ENCODE measurements at regions of chr9 and their contacts with region 1.

Region 1: GRCh38 chr9:73239570-73240267 is 88.1 kb downstream of the ANXA1 start:
- DNase-seq: no peak
- ATAC-seq: no peak
- H3K4me3 Mint-ChIP-seq: no peak overlapping the region
- H3K27ac Mint-ChIP-seq: no peak overlapping the region
- H3K4me1 Mint-ChIP-seq: no peaks in the 10 kb centered on the region
- H3K27me3 Mint-ChIP-seq: peaks cover 14% of the 10 kb centered on the region

Region 2: GRCh38 chr9:73173557-73174329 is 66.0 kb before region 1 on chr9:
- CTCF ChIA-PET with region 1: no interaction called
- POLR2A ChIA-PET with region 1: interaction called, 12 read pairs
- intact Hi-C with region 1: no loop called
- DNase-seq: no peak
- ATAC-seq: no peak
- H3K4me3 Mint-ChIP-seq: no peak overlapping the region
- H3K27ac Mint-ChIP-seq: no peak overlapping the region
- H3K4me1 Mint-ChIP-seq: peaks cover 10% of the 10 kb centered on the region
- H3K27me3 Mint-ChIP-seq: no peaks in the 10 kb centered on the region

Region 3: DNA sequence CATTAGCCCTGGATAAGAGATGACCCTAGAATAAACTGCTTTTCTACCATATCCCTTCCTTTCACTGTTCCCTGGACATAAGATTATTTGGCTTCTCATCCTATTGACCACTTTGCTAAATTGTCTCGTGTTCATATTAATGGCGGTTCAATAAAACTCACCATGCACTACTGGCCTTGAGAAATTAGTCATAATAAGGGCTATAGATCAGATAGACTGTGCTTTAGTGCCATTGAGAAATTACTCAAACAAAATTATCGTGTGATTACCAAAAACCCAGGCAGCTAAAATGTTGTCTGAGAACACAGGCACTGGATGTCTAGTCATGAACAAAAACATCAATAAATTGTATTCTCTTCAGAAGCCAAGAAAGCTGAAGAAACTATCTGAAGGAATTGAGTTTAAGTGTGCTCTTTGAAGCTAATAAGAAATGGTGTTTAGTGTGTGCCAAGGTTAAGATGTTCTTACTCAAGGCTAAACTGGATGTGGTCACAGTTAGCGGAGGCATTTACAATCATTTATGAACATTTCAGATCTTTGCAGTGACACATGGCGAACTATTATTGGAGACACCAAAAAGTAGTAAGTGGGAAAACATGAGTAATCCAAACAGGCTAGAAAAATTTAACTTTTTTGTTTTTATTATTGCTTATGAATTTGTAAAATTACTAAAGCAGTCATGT is 797.0 kb after region 1 on chr9:
- CTCF ChIA-PET with region 1: no interaction called
- POLR2A ChIA-PET with region 1: no interaction called
- intact Hi-C with region 1: no loop called
- DNase-seq: no peak
- ATAC-seq: peak; percentile 53
- H3K4me3 Mint-ChIP-seq: no peak overlapping the region
- H3K27ac Mint-ChIP-seq: no peak overlapping the region
- H3K4me1 Mint-ChIP-seq: peaks cover 3% of the 10 kb centered on the region
- H3K27me3 Mint-ChIP-seq: no peaks in the 10 kb centered on the region

Measured in activated CD4-positive, alpha-beta T cell treated with anti-CD3 and anti-CD28 coated beads for 36 hours (primary cell).